HCT116 (cell line): ENCODE measurements at regions of chr3 and their contacts with region 1.

Region 1: DNA sequence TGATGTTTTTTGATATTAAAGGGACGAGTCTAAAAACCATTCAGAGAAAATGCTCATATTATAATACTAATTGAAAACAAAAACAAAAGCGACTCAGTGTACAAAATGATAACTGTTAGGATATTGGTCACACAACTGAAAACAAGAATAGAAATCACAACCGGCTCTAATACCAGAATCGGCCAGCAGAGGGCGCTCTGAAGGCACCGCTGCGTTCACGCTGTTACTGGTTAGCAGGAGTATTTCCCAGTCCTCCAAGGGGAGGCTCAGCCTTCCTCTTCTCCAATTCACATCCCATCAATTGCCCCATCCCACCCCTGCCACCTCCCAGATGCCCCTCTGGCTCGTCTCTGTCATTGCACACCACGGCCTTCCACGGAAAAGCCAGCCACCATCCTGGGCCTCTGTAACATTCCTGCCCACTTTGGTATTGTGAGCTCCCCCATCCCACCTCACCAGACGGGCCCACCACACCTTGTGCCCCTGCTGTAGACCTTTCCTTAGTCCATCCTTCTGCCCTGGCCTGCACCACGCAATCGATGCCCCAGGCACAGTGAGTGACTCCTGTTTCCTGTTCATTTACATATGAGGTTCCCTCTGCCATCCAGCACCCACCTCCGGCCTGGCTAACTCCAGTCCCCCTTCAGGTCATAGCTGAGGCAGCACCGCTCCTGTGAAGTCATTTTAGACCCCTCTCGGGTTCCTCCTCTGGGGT is 8.5 kb downstream of the FAM107A start:
- DNase-seq: no peak
- ATAC-seq: peak; percentile 83
- H3K4me3 ChIP-seq: no peak overlapping the region
- H3K27ac ChIP-seq: no peak overlapping the region
- H3K4me1 ChIP-seq: peaks cover 0 to 25% of the 10 kb centered on the region in 2 experiments; a peak in 3 of 4 replicates
- H3K27me3 ChIP-seq: no peaks in the 10 kb centered on the region
- CTCF ChIP-seq: peak; percentile 80 to 93 (median 87)
- POLR2A ChIP-seq: no peak
- RAD21 ChIP-seq: peak; percentile 77

Region 2: GRCh38 chr3:58585005-58585786 is 16.5 kb after region 1 on chr3:
- CTCF ChIA-PET with region 1: interaction called, 10 read pairs
- POLR2A ChIA-PET with region 1: no interaction called
- RAD21 ChIA-PET with region 1: interaction called in 1 of 2 experiments, 3 read pairs
- intact Hi-C with region 1: no loop called
- DNase-seq: peak; percentile 57
- ATAC-seq: peak; percentile 98
- H3K4me3 ChIP-seq: peak overlapping the region; percentile 65 to 68
- H3K27ac ChIP-seq: peak overlapping the region; percentile 23; the same call in 1 of the 2 replicates
- H3K4me1 ChIP-seq: peaks cover 4 to 19% of the 10 kb centered on the region in 2 experiments; a peak in 3 of 4 replicates
- H3K27me3 ChIP-seq: no peaks in the 10 kb centered on the region
- CTCF ChIP-seq: peak in 2 of 3 experiments; percentile 74 to 85; a peak in 4 of 6 replicates
- POLR2A ChIP-seq: no peak
- RAD21 ChIP-seq: peak; percentile 23; the same call in 1 of the 2 replicates